ENCODE measurements at regions of chr19 and their contacts with region 1.

Region 1: DNA sequence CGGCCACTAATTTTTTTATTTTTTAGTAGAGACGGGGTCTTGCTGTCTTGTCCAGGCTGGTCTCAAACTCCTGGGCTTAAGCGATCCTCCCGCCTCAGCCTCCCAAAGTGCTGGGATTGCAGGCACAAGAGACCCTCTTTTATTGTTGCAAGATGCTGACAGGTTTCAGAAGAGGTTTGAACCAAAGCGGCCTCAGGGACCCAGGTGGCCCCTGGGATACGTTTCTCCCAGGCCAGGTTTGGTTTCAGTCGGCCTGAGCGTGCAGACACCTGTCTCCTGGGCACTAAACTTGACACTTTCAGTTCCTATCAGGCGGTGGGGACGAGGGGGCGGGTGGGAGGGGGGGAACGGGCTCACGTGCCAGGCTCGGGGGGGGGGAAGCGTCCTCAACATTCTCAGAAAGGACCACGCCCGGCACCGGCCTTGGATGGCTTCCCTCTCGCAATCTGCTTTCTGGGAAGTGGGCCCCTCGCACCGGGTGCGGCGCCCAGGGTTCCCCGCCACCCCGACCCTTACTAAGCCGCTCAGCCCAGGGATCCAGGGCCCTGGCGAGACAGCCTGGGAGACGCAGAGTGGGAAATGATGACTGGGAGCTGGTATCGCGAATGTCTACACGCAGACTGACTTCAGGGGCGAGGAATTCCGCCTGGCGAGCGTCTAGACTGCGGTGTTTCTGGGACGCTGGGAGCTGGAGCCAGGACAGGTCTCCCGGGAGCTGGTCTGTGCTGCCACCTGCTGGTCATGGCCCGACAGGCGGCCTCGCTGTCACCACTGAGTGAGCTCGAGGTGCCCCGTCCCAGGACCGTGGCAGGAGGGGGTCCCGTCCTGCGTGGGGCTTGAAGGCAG is 91.6 kb downstream of the GNG7 start:
- DNase-seq: peak; percentile 81 to 95 (median 87)
- ATAC-seq: peak; percentile 45
- H3K4me3 ChIP-seq: peak overlapping the region; percentile 59
- H3K4me3 Mint-ChIP-seq: peak overlapping the region; percentile 83
- H3K27ac ChIP-seq: no peak overlapping the region
- H3K27ac Mint-ChIP-seq: peak overlapping the region; percentile 30
- H3K4me1 ChIP-seq: peaks cover 44% of the 10 kb centered on the region
- H3K4me1 Mint-ChIP-seq: peaks cover 44% of the 10 kb centered on the region
- H3K27me3 ChIP-seq: no peaks in the 10 kb centered on the region
- H3K27me3 Mint-ChIP-seq: peaks cover 4% of the 10 kb centered on the region
- CTCF ChIP-seq: peak; percentile 98

Region 2: DNA sequence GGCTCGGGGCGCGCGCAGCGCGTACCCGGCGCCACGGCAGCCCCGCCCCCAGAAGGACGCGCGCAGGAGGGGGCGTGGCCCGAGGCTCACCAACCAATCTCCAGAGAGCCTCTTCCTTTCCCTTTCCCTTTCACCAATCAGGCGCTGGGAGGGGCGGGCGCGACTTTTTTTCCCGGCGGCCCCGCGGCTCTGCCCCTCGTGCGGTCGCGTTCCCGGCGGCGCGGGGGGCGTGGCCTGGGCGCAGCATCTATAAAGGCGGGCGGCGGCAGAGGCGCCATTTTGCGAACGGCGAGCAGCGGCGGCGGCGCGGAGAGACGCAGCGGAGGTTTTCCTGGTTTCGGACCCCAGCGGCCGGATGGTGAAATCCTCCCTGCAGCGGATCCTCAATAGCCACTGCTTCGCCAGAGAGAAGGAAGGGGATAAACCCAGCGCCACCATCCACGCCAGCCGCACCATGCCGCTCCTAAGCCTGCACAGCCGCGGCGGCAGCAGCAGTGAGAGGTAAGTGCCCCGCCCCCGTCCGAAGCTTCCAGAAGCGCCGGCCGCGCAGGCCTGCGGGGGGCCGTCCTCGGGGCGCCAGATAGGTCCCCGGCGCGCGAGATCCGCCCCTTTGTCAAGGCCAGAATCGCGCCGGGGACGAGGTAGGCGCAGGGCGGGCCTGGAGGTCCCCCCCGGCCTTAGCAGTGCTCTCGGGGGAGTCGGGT is 341.5 kb before region 1 on chr19:
- CTCF ChIA-PET with region 1: no interaction called
- POLR2A ChIA-PET with region 1: no interaction called
- intact Hi-C with region 1: loop called in 1 of 2 experiments (anchors 10 kb)
- DNase-seq: peak; percentile 98 to 99 (median 99)
- ATAC-seq: peak; percentile 77
- H3K4me3 ChIP-seq: peak overlapping the region; percentile 98
- H3K4me3 Mint-ChIP-seq: peak overlapping the region; percentile 97
- H3K27ac ChIP-seq: peak overlapping the region; percentile 50 to 94
- H3K27ac Mint-ChIP-seq: peak overlapping the region; percentile 97
- H3K4me1 ChIP-seq: peaks cover 50% of the 10 kb centered on the region
- H3K4me1 Mint-ChIP-seq: peaks cover 30% of the 10 kb centered on the region
- H3K27me3 ChIP-seq: peaks cover 0 to 6% of the 10 kb centered on the region in 2 experiments
- H3K27me3 Mint-ChIP-seq: no peaks in the 10 kb centered on the region
- CTCF ChIP-seq: no peak

Region 3: GRCh38 chr19:2469102-2469914 is 141.6 kb before region 1 on chr19:
- CTCF ChIA-PET with region 1: interaction called, 15 read pairs
- POLR2A ChIA-PET with region 1: interaction called, 8 read pairs
- intact Hi-C with region 1: loop called in 1 of 2 experiments (anchors 1 kb)
- DNase-seq: peak in 2 of 14 experiments; percentile 20 to 48
- ATAC-seq: no peak
- H3K4me3 ChIP-seq: no peak overlapping the region
- H3K4me3 Mint-ChIP-seq: no peak overlapping the region
- H3K27ac ChIP-seq: no peak overlapping the region
- H3K27ac Mint-ChIP-seq: no peak overlapping the region
- H3K4me1 ChIP-seq: peaks cover 8% of the 10 kb centered on the region
- H3K4me1 Mint-ChIP-seq: peaks cover 5% of the 10 kb centered on the region
- H3K27me3 ChIP-seq: no peaks in the 10 kb centered on the region
- H3K27me3 Mint-ChIP-seq: no peaks in the 10 kb centered on the region
- CTCF ChIP-seq: no peak

Region 4: DNA sequence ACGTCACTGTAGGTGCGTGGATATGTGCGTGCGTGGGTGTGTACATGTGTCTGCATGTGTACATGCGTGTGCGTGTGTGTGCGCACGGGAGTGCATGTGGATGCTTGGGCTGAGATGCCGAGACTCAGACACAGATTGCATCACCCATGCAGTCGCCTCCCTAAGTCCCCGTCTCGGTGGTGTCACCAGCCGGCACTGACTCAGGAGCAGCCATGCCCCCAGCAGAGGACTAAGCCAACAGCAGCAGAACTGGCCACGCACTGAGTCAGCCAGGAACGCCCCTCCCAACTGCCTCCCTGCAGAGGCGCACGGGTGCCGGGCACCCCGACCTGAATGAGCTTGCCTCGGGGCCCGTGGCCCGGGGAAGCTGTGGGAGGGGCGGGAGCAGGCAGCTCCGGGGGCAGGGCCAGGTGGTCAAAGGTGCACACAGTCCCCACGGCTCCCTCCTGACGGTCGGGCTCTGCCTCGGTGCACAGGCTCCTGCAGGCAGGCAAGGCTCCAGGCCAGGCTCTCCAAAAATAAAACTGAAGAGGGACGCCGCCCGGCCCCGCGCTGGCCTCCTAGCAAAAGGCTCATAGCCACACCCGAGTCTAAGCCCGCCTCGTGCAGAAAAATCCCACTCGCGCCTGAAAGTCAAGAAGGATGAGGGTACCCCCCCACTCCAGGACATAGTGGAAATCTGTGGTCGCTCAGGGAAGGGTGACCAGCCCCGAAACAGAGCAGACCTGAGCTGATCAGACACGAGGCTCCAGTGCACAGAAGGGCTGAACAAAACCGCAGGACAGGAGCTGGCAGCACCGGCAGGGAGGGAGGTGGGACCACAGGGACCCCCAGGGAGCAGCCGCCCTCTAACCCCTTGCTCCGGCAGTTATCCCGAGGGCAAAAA is 85.8 kb before region 1 on chr19:
- CTCF ChIA-PET with region 1: no interaction called
- POLR2A ChIA-PET with region 1: no interaction called
- intact Hi-C with region 1: no loop called
- DNase-seq: no peak
- ATAC-seq: no peak
- H3K4me3 ChIP-seq: no peak overlapping the region
- H3K4me3 Mint-ChIP-seq: no peak overlapping the region
- H3K27ac ChIP-seq: no peak overlapping the region
- H3K27ac Mint-ChIP-seq: no peak overlapping the region
- H3K4me1 ChIP-seq: no peaks in the 10 kb centered on the region
- H3K4me1 Mint-ChIP-seq: no peaks in the 10 kb centered on the region
- H3K27me3 ChIP-seq: no peaks in the 10 kb centered on the region
- H3K27me3 Mint-ChIP-seq: no peaks in the 10 kb centered on the region
- CTCF ChIP-seq: no peak

Region 5: DNA sequence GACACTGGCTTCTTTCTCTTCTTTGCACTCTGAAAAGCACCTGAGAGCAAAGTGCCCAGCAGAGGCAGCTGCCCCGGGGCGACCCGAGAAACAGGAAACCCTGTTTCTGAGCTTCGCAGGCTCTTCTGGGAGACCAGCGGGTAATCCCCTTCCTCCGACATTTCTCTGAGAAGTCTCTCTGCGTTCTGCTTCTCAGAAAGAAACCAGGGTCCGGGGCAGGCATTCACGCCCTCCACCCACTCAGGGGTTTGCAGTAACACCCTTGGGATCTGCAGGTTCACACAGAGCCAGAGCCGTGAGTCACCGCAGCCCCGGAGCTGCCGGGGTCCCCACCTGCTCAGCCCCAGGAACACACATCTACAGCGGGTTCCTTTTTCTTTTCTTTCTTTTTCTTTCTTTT is 49.0 kb before region 1 on chr19:
- CTCF ChIA-PET with region 1: interaction called, 8 read pairs
- POLR2A ChIA-PET with region 1: interaction called, 4 read pairs
- intact Hi-C with region 1: loop called in 1 of 2 experiments (anchors 5 kb)
- DNase-seq: peak; percentile 41 to 86 (median 63)
- ATAC-seq: peak; percentile 95
- H3K4me3 ChIP-seq: peak overlapping the region; percentile 72
- H3K4me3 Mint-ChIP-seq: peak overlapping the region; percentile 95
- H3K27ac ChIP-seq: peak overlapping the region; percentile 63 to 77
- H3K27ac Mint-ChIP-seq: peak overlapping the region; percentile 94
- H3K4me1 ChIP-seq: peaks cover 20% of the 10 kb centered on the region
- H3K4me1 Mint-ChIP-seq: peaks cover 15% of the 10 kb centered on the region
- H3K27me3 ChIP-seq: no peaks in the 10 kb centered on the region
- H3K27me3 Mint-ChIP-seq: no peaks in the 10 kb centered on the region
- CTCF ChIP-seq: no peak

Region 6: GRCh38 chr19:2627319-2627829 is 16.5 kb after region 1 on chr19:
- CTCF ChIA-PET with region 1: interaction called, 29 read pairs
- POLR2A ChIA-PET with region 1: interaction called, 3 read pairs
- intact Hi-C with region 1: no loop called
- DNase-seq: peak in 3 of 14 experiments; percentile 57 to 79 (median 68)
- ATAC-seq: peak; percentile 26
- H3K4me3 ChIP-seq: no peak overlapping the region
- H3K4me3 Mint-ChIP-seq: no peak overlapping the region
- H3K27ac ChIP-seq: peak overlapping the region in 1 of 2 donors; percentile 11
- H3K27ac Mint-ChIP-seq: peak overlapping the region; percentile 81
- H3K4me1 ChIP-seq: peaks cover 48% of the 10 kb centered on the region
- H3K4me1 Mint-ChIP-seq: peaks cover 51% of the 10 kb centered on the region
- H3K27me3 ChIP-seq: no peaks in the 10 kb centered on the region
- H3K27me3 Mint-ChIP-seq: no peaks in the 10 kb centered on the region
- CTCF ChIP-seq: no peak

Region 7: GRCh38 chr19:2691951-2692350 is 81.1 kb after region 1 on chr19:
- CTCF ChIA-PET with region 1: no interaction called
- POLR2A ChIA-PET with region 1: no interaction called
- intact Hi-C with region 1: no loop called
- DNase-seq: no peak
- ATAC-seq: no peak
- H3K4me3 ChIP-seq: no peak overlapping the region
- H3K4me3 Mint-ChIP-seq: no peak overlapping the region
- H3K27ac ChIP-seq: no peak overlapping the region
- H3K27ac Mint-ChIP-seq: no peak overlapping the region
- H3K4me1 ChIP-seq: no peaks in the 10 kb centered on the region
- H3K4me1 Mint-ChIP-seq: peaks cover 5% of the 10 kb centered on the region
- H3K27me3 ChIP-seq: no peaks in the 10 kb centered on the region
- H3K27me3 Mint-ChIP-seq: no peaks in the 10 kb centered on the region
- CTCF ChIP-seq: no peak